Dendritic cell treated with granulocyte-macrophage colony-stimulating factor and Interleukin-4, amounts not matched to agents 40 ng/mL and 50 ng/mL, for 4 days (primary cell): ENCODE measurements at regions of chr11 and their contacts with region 1.

Region 1: GRCh38 chr11:76207642-76208401 is 1.5 kb upstream of the WNT11 start:
- H3K4me3 Mint-ChIP-seq: peak overlapping the region; percentile 82
- H3K27ac Mint-ChIP-seq: peak overlapping the region; percentile 31
- H3K4me1 Mint-ChIP-seq: peaks cover 52% of the 10 kb centered on the region
- H3K27me3 Mint-ChIP-seq: peaks cover 91% of the 10 kb centered on the region

Region 2: DNA sequence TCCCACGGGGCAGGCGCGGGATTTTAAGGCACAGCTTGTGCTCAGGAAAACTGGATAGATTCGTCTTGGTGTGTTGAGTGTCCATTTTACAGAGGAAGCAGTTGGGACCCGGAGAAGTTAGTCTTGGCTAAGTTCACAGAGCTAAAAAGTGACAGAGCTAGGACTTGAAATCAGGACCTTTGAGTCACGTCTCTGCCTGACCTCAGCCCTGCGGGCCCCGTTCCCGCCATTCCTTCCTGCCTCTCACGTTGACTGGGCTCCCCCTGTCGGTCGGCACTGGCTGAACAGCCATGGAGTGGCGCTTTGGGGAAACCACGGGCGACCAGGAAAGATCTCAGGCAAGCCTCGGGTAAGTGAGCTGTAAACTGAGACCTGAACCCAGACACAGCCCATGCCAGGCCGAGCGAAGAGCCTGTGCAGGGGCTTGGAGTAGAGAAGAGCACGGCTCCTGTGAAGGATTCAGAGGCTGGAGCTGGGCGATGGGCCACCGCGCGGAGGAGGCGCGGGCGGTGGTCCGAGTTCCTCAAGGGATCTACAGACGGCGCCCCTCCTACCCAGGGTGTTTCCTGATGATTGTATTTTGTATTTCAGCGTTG is 55.6 kb before region 1 on chr11:
- intact Hi-C with region 1: no loop called
- H3K4me3 Mint-ChIP-seq: peak overlapping the region; percentile 78
- H3K27ac Mint-ChIP-seq: peak overlapping the region; percentile 56
- H3K4me1 Mint-ChIP-seq: peaks cover 25% of the 10 kb centered on the region
- H3K27me3 Mint-ChIP-seq: peaks cover 30% of the 10 kb centered on the region

Region 3: GRCh38 chr11:76235233-76236091 is 27.6 kb after region 1 on chr11:
- intact Hi-C with region 1: loop called (anchors 2 kb)
- H3K4me3 Mint-ChIP-seq: peak overlapping the region; percentile 86
- H3K27ac Mint-ChIP-seq: peak overlapping the region; percentile 82
- H3K4me1 Mint-ChIP-seq: peaks cover 37% of the 10 kb centered on the region
- H3K27me3 Mint-ChIP-seq: peaks cover 9% of the 10 kb centered on the region

Region 4: DNA sequence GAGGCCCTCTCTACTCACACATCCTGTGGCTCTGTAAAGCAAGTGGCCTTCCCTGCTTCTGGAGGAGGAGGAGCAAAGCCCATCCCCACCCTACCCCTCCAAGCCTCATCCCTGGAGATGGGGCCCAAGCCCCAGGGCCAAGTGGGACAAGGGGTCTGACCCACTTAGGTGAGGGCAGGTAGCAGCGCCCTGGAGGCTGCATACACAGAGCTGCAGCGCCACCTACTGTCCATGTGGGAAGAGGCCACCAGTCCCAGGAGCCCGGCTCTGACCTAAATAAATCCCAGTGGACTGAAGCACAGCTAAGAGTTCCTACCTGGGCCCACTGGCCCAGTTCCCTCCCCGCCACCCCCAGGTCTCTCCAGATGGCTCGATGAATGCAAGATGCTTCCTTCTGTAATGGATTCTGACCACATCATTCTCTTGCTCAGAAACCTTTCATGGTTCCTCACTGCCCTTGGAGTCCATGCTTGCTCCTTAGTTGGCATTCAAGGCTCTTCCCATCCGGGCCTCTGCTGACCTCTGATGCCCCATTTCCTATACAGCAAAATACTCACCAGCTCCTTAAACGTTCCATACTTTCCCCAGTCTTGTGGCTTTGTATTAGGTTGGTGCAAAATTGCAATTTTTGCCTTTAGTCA is 111.0 kb after region 1 on chr11:
- intact Hi-C with region 1: loop called (anchors 1 kb)
- H3K4me3 Mint-ChIP-seq: no peak overlapping the region
- H3K27ac Mint-ChIP-seq: no peak overlapping the region
- H3K4me1 Mint-ChIP-seq: peaks cover 29% of the 10 kb centered on the region
- H3K27me3 Mint-ChIP-seq: peaks cover 42% of the 10 kb centered on the region